ENCODE measurements at regions of chr6 and their contacts with region 1.

Region 1: GRCh38 chr6:45504947-45505346 is 127.2 kb upstream of the SUPT3H start:
- DNase-seq: peak; percentile 44
- H3K4me3 Mint-ChIP-seq: no peak overlapping the region
- H3K27ac Mint-ChIP-seq: peak overlapping the region; percentile 71
- H3K4me1 Mint-ChIP-seq: peaks cover 15% of the 10 kb centered on the region
- H3K27me3 Mint-ChIP-seq: no peaks in the 10 kb centered on the region
- CTCF ChIP-seq: no peak

Region 2: DNA sequence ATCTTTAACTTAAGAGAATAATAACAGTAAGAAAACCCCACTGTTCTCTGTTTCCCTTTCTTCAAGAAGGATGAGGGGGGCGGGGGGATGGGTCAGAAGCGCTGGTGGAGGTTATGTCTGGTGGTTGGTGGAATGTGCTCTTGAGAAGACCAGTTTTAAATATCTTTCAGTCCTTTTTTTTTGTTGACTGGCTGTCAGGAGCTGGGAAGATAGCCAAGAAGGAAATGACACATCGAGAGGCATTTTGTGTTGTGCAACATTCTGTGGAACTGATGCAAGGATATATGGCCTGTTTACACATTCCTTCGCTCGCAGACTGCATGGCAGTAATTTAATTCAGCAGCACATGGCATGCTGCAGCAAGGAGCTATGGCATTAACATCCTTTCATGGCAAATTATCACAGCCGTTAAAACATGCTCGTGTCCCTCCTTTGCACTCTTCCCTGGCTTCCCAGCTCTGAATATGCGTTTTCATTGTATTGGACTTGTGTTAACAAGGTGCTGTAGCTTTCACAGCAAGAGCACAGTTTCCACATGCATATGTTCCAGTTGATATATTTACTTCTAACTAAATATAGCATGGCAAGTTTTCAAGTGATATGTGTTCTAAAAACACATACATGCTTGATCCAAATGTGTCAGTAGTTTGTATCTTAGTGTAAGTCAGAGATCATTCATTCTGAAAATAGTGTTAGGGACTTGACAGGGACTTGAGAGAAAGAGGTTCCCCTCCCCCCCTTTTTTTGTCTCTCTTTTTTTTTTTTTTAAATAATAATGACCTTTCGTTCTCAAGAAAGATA is 59.0 kb before region 1 on chr6:
- CTCF ChIA-PET with region 1: no interaction called
- intact Hi-C with region 1: loop called (anchors 2 kb)
- DNase-seq: peak; percentile 81
- H3K4me3 Mint-ChIP-seq: peak overlapping the region; percentile 41
- H3K27ac Mint-ChIP-seq: peak overlapping the region; percentile 91
- H3K4me1 Mint-ChIP-seq: peaks cover 36% of the 10 kb centered on the region
- H3K27me3 Mint-ChIP-seq: no peaks in the 10 kb centered on the region
- CTCF ChIP-seq: no peak

Region 3: DNA sequence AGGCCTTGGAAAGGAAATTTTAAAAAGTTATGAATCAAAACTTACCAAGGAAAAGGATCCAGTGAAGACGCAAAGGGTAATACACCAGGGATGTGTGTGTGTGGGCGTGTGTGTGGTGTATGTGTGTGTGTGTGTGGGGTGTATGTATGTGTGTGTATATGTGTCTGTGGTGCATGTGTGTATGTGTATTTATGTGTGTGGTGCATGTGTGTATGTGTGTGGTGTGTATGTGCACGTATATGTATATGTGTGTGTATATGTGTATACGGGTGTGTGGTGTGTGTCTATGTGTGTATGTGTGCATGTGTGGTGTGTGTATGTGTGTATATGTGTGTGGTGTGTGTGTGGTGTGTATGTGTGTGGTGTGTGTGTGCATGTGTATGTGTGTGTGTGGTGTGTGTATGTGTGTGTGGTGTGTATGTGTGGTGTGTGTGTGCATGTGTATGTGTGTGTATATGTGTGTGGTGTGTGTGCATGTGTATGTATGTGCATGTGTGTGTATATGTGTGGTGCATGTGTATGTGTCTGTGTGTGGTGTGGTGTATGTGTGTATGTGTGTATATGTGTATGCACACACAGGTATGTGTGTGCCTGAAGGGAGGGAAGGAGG is 48.9 kb after region 1 on chr6:
- CTCF ChIA-PET with region 1: no interaction called
- intact Hi-C with region 1: loop called (anchors 2 kb)
- DNase-seq: no peak
- H3K4me3 Mint-ChIP-seq: no peak overlapping the region
- H3K27ac Mint-ChIP-seq: no peak overlapping the region
- H3K4me1 Mint-ChIP-seq: no peaks in the 10 kb centered on the region
- H3K27me3 Mint-ChIP-seq: no peaks in the 10 kb centered on the region
- CTCF ChIP-seq: no peak

Region 4: GRCh38 chr6:45566882-45567281 is 61.9 kb after region 1 on chr6:
- CTCF ChIA-PET with region 1: no interaction called
- intact Hi-C with region 1: no loop called
- DNase-seq: peak; percentile 77
- H3K4me3 Mint-ChIP-seq: no peak overlapping the region
- H3K27ac Mint-ChIP-seq: peak overlapping the region; percentile 78
- H3K4me1 Mint-ChIP-seq: peaks cover 52% of the 10 kb centered on the region
- H3K27me3 Mint-ChIP-seq: no peaks in the 10 kb centered on the region
- CTCF ChIP-seq: no peak

Region 5: DNA sequence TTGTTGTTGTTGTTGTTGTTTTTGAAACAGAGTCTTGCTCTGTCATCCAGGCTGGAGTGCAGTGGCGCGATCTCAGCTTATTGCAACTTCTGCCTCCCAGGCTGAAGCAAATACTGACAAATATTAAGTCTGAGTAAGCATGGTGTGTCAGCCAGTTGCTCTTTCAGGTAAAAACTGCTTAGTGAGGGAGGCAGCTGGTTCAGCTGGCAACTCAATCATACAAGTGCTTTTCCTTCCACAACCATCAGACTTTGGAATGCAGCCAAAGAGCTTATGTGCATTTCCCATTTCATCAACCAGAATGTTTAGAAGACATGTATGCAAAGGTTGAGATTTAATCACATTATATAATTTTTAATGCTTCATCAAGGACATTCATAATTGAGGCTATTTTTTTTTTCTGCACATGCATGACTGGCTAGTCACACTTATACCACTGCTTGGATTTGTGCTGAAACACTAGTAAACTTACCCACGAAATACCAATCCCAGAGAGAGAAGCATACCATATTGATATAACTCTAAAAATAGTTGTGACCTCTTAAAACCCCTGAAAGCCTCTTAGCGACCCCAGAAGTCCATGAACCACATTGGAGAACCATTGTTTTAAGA is 454.7 kb after region 1 on chr6:
- CTCF ChIA-PET with region 1: no interaction called
- intact Hi-C with region 1: no loop called
- DNase-seq: no peak
- H3K4me3 Mint-ChIP-seq: no peak overlapping the region
- H3K27ac Mint-ChIP-seq: no peak overlapping the region
- H3K4me1 Mint-ChIP-seq: no peaks in the 10 kb centered on the region
- H3K27me3 Mint-ChIP-seq: no peaks in the 10 kb centered on the region
- CTCF ChIP-seq: no peak

Measured in Calu3 (cell line).